ENCODE measurements at regions of chr7 and their contacts with region 1.

Region 1: DNA sequence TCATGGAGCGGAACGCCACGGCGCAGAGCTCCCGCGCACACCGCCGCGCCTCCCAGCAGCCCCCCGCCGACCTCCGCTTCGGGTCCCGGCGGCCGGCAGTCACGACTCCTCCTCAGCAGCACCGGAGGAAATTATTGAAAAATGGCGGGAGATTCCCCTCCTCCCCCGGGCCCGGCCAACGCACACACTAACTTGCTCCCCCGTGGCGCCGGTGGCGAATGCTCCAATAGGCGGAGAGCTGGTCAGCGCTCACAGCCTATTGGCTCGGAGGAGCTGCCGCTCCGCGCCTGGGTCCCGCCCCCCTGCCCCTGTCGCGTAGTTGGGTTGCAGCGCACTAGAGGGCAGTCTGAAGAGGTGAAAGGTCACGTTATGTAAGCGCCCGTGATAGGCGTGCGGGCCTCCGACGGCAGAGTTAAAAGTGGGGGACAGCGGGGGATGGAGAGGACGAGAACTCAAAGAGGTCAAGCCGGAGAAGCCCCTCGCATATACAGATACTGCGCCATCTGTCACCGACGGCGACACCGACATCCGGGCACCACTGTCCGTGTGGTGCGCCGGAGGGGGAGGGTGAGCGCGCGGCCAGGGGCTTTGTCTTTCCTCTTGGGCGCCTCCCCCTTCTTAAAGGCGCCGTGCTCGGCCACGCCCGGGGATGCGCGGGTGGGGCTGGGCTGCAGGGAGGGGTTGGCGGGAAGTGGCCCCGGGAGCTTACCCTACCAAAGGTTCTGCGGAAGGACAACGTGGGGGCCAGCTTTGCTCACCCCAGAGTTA is at the start of gene BAZ1B:
- DNase-seq: peak; percentile 99
- ATAC-seq: peak; percentile 98
- total RNA-seq, gene BAZ1B: 40.9 TPM

Region 2: GRCh38 chr7:73451780-73452398 is 70.4 kb before region 1 on chr7:
- intact Hi-C with region 1: no loop called
- DNase-seq: no peak
- ATAC-seq: peak; percentile 60

Region 3: DNA sequence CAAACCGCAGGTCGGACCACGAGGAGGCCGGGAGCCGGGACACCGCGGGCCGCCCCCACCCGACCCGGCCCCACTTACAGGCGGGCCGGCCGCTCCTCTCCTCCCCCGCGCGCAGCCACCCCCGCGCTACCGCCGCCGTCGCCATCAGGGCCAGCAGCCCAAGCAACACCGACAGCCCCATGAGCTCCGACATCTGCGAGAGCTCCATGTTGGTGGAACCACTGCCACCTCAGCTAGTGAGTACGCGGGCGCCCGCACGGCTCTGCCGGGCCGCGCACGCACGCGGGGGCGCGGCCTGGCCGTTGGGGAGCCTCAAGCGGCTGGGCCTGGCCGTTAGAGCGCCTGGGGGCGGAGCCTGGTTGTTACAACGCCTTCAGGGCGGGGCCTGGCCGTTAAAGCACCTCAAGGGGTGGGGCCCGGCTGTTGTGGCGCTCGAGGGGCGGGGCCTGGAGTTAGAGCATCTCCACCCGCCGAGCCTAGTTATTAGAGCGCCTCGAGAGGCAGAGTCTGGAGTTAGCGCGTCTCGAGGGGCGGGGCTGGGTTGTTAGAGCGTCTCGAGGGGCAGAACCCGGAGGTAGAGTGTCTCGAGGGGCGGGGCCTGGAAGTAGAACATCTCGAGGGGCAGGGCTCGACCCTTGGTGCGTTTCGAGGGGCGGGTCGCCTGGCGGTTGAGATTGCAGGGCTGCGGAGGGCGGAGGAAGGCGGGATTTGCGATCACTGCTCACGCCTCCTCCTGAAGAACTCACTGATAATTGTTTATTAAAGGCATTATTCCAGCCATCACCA is 56.2 kb after region 1 on chr7 and contains the start of gene TBL2:
- intact Hi-C with region 1: loop called (anchors 1 kb)
- DNase-seq: peak; percentile 100
- ATAC-seq: peak; percentile 98
- total RNA-seq, gene TBL2: 10.4 TPM

Region 4: GRCh38 chr7:74068393-74069085 is 546.2 kb after region 1 on chr7:
- intact Hi-C with region 1: no loop called
- DNase-seq: peak; percentile 51
- ATAC-seq: no peak

Measured in Right ventricle myocardium inferior (tissue), 1 donor.